Gastrocnemius medialis (tissue), 4 donors: ENCODE measurements at regions of chr2 and their contacts with region 1.

Region 1: DNA sequence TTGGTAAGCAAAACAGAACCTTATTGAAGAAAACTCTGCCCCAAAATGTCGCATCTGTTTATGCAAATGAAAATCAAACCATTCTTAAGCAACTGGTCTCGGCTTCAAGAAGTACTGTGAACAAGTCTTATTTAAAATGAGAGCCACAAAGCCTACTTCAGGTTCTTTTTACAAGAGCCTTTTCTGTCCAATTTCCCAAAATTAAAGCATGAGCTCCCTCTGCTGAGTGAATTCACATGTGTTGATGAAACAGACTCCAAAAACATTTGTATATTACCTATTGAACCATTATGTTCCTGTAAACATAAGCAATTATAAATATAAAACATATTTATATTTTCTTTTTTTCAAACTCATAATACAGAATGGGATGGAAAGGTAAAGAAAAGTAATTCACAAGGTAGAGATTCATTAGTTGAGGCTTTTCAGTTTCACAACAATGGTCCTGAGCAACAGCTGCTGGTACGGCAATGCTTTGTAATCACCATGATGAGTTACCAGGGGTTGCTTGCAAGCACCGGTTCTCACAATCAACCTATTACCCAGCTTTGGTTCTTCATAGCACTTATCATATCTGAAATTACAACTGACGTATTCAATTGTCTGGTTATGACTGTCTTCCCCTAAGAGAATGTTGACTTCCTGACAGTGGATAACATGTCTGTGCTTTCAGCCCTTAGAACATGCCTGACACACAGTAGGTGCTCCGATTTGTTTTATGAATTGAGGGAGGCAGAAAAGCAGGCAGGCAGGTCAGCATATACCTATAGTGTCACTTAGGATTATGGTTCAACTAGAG is 108.4 kb upstream of the BZW1 start:
- DNase-seq: no peak
- ATAC-seq: no peak
- H3K4me3 ChIP-seq: no peak overlapping the region
- H3K27ac ChIP-seq: no peak overlapping the region
- H3K4me1 ChIP-seq: no peaks in the 10 kb centered on the region
- H3K27me3 ChIP-seq: no peaks in the 10 kb centered on the region
- CTCF ChIP-seq: peak in 4 of 5 experiments; percentile 11 to 36 (median 22)
- POLR2A ChIP-seq: no peak

Region 2: GRCh38 chr2:199979832-199980628 is 723.3 kb before region 1 on chr2:
- in situ Hi-C with region 1: no loop called
- intact Hi-C with region 1: loop called (anchors 10 kb)
- DNase-seq: peak; percentile 40 to 55
- ATAC-seq: peak; percentile 63 to 76
- H3K4me3 ChIP-seq: peak overlapping the region in 3 of 4 donors; percentile 10 to 32 (median 22)
- H3K27ac ChIP-seq: no peak overlapping the region
- H3K4me1 ChIP-seq: peaks cover 0 to 8% of the 10 kb centered on the region in 2 donors
- H3K27me3 ChIP-seq: no peaks in the 10 kb centered on the region
- CTCF ChIP-seq: peak; percentile 71 to 88 (median 79)
- POLR2A ChIP-seq: no peak

Region 3: DNA sequence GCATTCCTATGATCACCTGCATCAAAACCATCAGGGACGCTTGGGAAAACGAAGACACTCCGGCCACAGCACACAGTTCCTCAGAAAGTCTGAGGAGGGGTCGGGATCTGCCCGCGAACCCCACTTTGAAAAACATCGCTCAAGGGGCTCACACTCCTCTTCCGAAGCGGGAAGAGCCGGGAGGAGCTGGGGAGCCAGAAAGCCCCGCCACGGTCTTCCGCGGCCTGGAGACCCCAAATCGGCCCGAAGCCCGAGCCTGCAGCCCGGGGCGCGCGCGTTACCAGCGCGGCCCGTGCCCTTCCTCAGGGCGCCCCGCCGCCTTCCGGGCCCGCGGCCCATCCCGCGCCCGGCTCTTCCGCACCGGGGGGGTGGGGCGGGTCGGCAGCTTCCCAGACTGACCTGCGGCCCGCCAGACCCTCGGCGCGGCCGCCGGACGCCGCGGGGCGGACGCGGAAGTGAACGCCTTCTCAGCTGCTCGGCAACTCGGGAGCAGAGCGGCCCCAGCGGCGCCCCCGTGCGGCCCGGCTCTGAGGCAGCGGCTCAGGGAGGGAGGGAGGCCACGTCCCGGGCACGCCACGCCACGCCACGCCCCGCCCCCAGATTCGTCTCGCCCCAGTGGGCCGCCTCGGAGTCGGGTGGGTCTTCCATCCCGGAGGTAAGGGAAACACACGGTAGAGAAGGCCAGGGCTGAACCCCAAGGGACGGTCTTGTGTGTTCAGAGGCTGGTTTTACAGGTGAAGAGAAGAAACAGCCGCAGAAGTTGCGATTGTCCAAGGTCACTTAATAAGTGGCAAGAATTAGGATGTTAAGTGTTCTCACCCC is 193.5 kb before region 1 on chr2 and contains the start of gene KCTD18:
- in situ Hi-C with region 1: no loop called
- intact Hi-C with region 1: loop called (anchors 5 kb)
- DNase-seq: peak; percentile 76 to 86
- ATAC-seq: peak; percentile 96 to 97
- H3K4me3 ChIP-seq: peak within 1 kb of the TSS; percentile 71 to 89 (median 80)
- H3K27ac ChIP-seq: peak within 1 kb of the TSS; percentile 77 to 89 (median 81)
- H3K4me1 ChIP-seq: peaks cover 9 to 15% of the 10 kb centered on the region in 2 donors
- H3K27me3 ChIP-seq: peaks cover 0 to 2% (median 0%) of the 10 kb centered on the region in 3 donors
- CTCF ChIP-seq: peak; percentile 73 to 91 (median 77)
- POLR2A ChIP-seq: peak; percentile 88 to 93
- total RNA-seq, gene KCTD18: 16.6 to 20.1 (median 19.6) TPM

Region 4: GRCh38 chr2:200578778-200579177 is 124.5 kb before region 1 on chr2:
- in situ Hi-C with region 1: loop called in 2 of 4 experiments (anchors 10 kb)
- intact Hi-C with region 1: loop called (anchors 5 kb)
- DNase-seq: no peak
- ATAC-seq: no peak
- H3K4me3 ChIP-seq: no peak overlapping the region
- H3K27ac ChIP-seq: no peak overlapping the region
- H3K4me1 ChIP-seq: no peaks in the 10 kb centered on the region
- H3K27me3 ChIP-seq: no peaks in the 10 kb centered on the region
- CTCF ChIP-seq: peak in 1 of 5 experiments; percentile 25
- POLR2A ChIP-seq: no peak

Region 5: GRCh38 chr2:200585730-200586643 is 117.3 kb before region 1 on chr2 and contains the start of gene AOX1:
- in situ Hi-C with region 1: loop called in 1 of 4 experiments (anchors 10 kb)
- intact Hi-C with region 1: no loop called
- DNase-seq: peak; percentile 67 to 73
- ATAC-seq: peak; percentile 74
- H3K4me3 ChIP-seq: peak within 1 kb of the TSS; percentile 55 to 68 (median 59)
- H3K27ac ChIP-seq: peak within 1 kb of the TSS; percentile 63 to 78 (median 69)
- H3K4me1 ChIP-seq: peaks cover 0 to 5% of the 10 kb centered on the region in 2 donors
- H3K27me3 ChIP-seq: no peaks in the 10 kb centered on the region
- CTCF ChIP-seq: no peak
- POLR2A ChIP-seq: peak; percentile 43 to 59
- total RNA-seq, gene AOX1: 22.1 to 41.8 (median 34.0) TPM